ENCODE measurements at regions of chr3 and their contacts with region 1.

Region 1: GRCh38 chr3:4712143-4712542 is 219.0 kb downstream of the ITPR1 start:
- DNase-seq: no peak
- H3K4me3 Mint-ChIP-seq: no peak overlapping the region
- H3K27ac Mint-ChIP-seq: no peak overlapping the region
- H3K4me1 Mint-ChIP-seq: peaks cover 22% of the 10 kb centered on the region
- H3K27me3 Mint-ChIP-seq: no peaks in the 10 kb centered on the region

Region 2: GRCh38 chr3:4350789-4351163 is 361.4 kb before region 1 on chr3:
- CTCF ChIA-PET with region 1: interaction called, 10 read pairs
- POLR2A ChIA-PET with region 1: no interaction called
- DNase-seq: peak; percentile 54
- H3K4me3 Mint-ChIP-seq: peak overlapping the region; percentile 55
- H3K27ac Mint-ChIP-seq: peak overlapping the region; percentile 16
- H3K4me1 Mint-ChIP-seq: peaks cover 20% of the 10 kb centered on the region
- H3K27me3 Mint-ChIP-seq: no peaks in the 10 kb centered on the region

Region 3: GRCh38 chr3:4834403-4834866 is 122.3 kb after region 1 on chr3:
- CTCF ChIA-PET with region 1: interaction called, 11 read pairs
- POLR2A ChIA-PET with region 1: no interaction called
- DNase-seq: peak; percentile 88
- H3K4me3 Mint-ChIP-seq: peak overlapping the region; percentile 69
- H3K27ac Mint-ChIP-seq: peak overlapping the region; percentile 93
- H3K4me1 Mint-ChIP-seq: peaks cover 87% of the 10 kb centered on the region
- H3K27me3 Mint-ChIP-seq: no peaks in the 10 kb centered on the region

Region 4: GRCh38 chr3:4986782-4987537 is 274.8 kb after region 1 on chr3:
- CTCF ChIA-PET with region 1: interaction called, 52 read pairs
- POLR2A ChIA-PET with region 1: interaction called, 11 read pairs
- DNase-seq: peak; percentile 86
- H3K4me3 Mint-ChIP-seq: peak overlapping the region; percentile 76
- H3K27ac Mint-ChIP-seq: peak overlapping the region; percentile 87
- H3K4me1 Mint-ChIP-seq: peaks cover 69% of the 10 kb centered on the region
- H3K27me3 Mint-ChIP-seq: no peaks in the 10 kb centered on the region

Region 5: DNA sequence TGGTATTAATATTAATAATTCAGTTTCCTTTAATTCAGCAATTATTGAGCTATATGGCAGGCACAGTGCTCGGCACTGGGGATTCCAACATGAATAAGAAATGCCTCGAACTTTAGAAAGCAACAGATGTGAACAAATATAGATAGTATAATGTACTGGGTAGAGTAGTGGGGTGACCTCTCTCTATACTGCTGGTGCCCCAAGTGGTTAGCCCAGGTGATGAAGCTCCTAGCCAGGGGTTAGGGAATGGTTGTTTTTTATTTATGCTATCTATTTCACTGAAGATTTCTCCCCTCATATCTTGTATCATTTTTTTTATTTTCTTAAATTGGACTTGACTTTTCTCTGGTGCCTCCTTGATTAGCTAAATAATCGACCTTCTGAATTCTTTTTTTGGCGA is 329.2 kb after region 1 on chr3:
- CTCF ChIA-PET with region 1: interaction called, 17 read pairs
- POLR2A ChIA-PET with region 1: no interaction called
- DNase-seq: no peak
- H3K4me3 Mint-ChIP-seq: no peak overlapping the region
- H3K27ac Mint-ChIP-seq: no peak overlapping the region
- H3K4me1 Mint-ChIP-seq: peaks cover 30% of the 10 kb centered on the region
- H3K27me3 Mint-ChIP-seq: no peaks in the 10 kb centered on the region

Measured in activated CD4-positive, alpha-beta memory T cell treated with anti-CD3 and anti-CD28 coated beads, Interleukin-2, amount 10 ng/mL, durations not matched to agents 7 days and 5 days (primary cell).